ENCODE measurements at regions of chr6 and their contacts with region 1.

Region 1: DNA sequence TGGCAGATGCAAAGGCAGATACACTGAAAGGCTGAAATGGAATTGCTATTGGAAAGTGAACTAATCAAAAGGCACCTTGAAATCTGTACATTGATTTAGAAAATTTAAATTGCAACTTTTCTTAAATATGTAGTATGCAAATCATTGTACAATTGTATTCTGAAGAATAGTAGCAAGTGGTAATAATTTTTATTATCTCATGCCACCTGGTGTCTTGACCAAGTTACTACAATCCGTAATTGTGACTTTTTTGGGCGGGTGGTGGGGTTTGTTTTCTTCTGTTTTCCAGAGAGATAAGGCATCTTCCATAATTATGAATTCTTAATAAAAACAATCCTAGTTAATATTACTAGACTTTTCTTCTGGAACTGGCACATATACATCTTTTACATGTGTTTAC is 12.5 kb upstream of the BCKDHB start:
- H3K4me3 Mint-ChIP-seq: no peak overlapping the region
- H3K27ac Mint-ChIP-seq: no peak overlapping the region
- H3K4me1 Mint-ChIP-seq: no peaks in the 10 kb centered on the region
- H3K27me3 Mint-ChIP-seq: peaks cover 6% of the 10 kb centered on the region

Region 2: GRCh38 chr6:79570129-79571029 is 523.6 kb before region 1 on chr6:
- intact Hi-C with region 1: loop called (anchors 5 kb)
- H3K4me3 Mint-ChIP-seq: peak overlapping the region; percentile 26
- H3K27ac Mint-ChIP-seq: no peak overlapping the region
- H3K4me1 Mint-ChIP-seq: no peaks in the 10 kb centered on the region
- H3K27me3 Mint-ChIP-seq: no peaks in the 10 kb centered on the region

Region 3: GRCh38 chr6:79949233-79949632 is 144.8 kb before region 1 on chr6:
- intact Hi-C with region 1: loop called (anchors 1 kb)
- H3K4me3 Mint-ChIP-seq: no peak overlapping the region
- H3K27ac Mint-ChIP-seq: no peak overlapping the region
- H3K4me1 Mint-ChIP-seq: peaks cover 9% of the 10 kb centered on the region
- H3K27me3 Mint-ChIP-seq: peaks cover 57% of the 10 kb centered on the region

Region 4: DNA sequence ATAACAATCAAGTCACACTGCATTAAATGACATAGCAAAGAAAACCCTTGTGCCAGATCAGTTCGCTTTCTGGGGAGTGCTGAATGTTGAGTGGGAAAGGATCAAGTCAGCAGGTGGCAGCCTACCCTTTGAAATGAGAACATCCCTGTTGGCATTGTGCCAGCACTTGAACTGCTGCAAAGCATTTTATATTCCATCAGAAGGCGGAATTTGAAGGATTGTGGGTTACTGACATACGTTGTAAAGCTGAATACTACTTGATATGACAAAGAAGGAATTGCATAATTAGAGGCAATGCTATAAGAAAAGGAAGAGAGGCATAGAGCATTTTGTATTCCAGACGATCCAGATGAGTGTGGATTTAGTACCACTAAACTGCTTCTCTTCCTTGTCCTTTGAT is 39.0 kb after region 1 on chr6:
- intact Hi-C with region 1: no loop called
- H3K4me3 Mint-ChIP-seq: no peak overlapping the region
- H3K27ac Mint-ChIP-seq: no peak overlapping the region
- H3K4me1 Mint-ChIP-seq: peaks cover 10% of the 10 kb centered on the region
- H3K27me3 Mint-ChIP-seq: no peaks in the 10 kb centered on the region